ENCODE measurements at regions of chr3 and their contacts with region 1.

Region 1: DNA sequence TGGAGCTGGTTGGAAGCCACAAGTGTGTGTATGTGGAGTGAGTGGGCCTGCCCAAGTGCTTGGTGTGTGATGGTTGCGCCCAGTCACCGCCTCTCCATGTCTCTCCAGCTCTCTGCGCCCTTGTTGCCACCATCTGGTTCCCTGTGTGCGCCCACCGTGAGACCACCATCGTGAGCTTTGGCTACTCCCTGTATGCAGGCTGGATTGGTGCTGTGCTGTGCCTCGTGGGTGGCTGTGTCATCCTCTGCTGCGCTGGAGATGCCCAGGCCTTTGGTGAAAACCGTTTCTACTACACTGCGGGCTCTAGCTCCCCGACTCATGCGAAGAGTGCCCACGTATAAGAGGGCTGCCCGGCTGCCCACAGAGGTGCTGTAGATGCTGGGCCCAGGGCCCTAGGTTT is 13.7 kb downstream of the CLDN11 start:
- DNase-seq: no peak
- H3K4me3 ChIP-seq: no peak overlapping the region
- H3K27ac ChIP-seq: no peak overlapping the region
- H3K4me1 ChIP-seq: no peaks in the 10 kb centered on the region
- H3K27me3 ChIP-seq: no peaks in the 10 kb centered on the region
- CTCF ChIP-seq: no peak

Region 2: GRCh38 chr3:170485696-170486095 is 53.3 kb after region 1 on chr3:
- CTCF ChIA-PET with region 1: no interaction called
- POLR2A ChIA-PET with region 1: interaction called, 11 read pairs
- intact Hi-C with region 1: no loop called
- DNase-seq: no peak
- H3K4me3 ChIP-seq: no peak overlapping the region
- H3K27ac ChIP-seq: no peak overlapping the region
- H3K4me1 ChIP-seq: no peaks in the 10 kb centered on the region
- H3K27me3 ChIP-seq: no peaks in the 10 kb centered on the region
- CTCF ChIP-seq: no peak

Measured in A673 (cell line).